CD8-positive, alpha-beta memory T cell (primary cell): ENCODE measurements at regions of chr6 and their contacts with region 1.

Region 1: DNA sequence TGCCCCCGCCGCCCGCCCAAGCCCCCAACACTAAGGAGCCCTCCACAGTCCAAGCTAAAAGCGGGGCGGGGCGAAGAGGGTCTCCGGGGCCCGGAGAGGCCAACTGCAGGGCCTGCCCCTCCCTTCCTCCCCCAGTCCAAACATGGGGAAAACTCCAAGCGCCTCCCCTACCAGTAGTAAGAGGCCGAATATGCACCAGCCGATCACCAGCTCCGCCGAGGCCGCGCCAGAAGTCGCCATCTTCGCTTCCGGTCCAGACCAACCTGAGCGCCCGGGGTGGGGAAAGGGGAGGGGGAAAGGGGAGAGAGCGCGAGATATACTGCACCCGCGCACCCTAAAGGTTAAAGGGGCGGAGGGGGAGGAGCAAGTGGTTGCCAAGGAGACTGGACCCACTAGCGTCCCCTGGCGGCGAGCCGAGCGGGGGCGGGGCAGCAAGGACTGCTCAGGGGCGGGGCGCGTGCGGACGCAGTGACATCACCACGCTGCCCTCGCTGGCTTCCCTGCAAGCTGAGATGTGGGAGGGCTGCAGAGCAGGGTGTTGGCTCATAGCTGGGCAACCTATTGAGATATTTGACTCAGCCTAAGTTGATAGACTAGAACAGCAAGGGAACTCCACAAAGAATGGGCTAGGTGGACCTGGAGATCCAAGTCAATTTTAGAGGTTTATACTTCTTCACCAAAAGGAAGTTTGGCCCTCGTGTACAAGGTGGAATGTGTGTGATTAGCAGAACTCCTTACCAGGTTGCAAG is at the start of gene LMBRD1:
- DNase-seq: peak; percentile 98 to 99 (median 99)
- H3K4me3 ChIP-seq: peak within 1 kb of the TSS; percentile 85
- H3K4me3 Mint-ChIP-seq: peak within 1 kb of the TSS; percentile 90 to 98 (median 93)
- H3K27ac ChIP-seq: peak within 1 kb of the TSS; percentile 97
- H3K27ac Mint-ChIP-seq: peak within 1 kb of the TSS; percentile 96 to 100 (median 98)
- H3K4me1 ChIP-seq: peaks cover 24% of the 10 kb centered on the region
- H3K4me1 Mint-ChIP-seq: peaks cover 43 to 59% (median 53%) of the 10 kb centered on the region in 3 donors
- H3K27me3 ChIP-seq: no peaks in the 10 kb centered on the region
- H3K27me3 Mint-ChIP-seq: no peaks in the 10 kb centered on the region
- total RNA-seq, gene LMBRD1: 16.2 to 17.3 TPM

Region 2: GRCh38 chr6:69813508-69813907 is 16.7 kb after region 1 on chr6:
- CTCF ChIA-PET with region 1: interaction called, 17 read pairs
- POLR2A ChIA-PET with region 1: interaction called, 9 read pairs
- DNase-seq: peak in 1 of 5 donors; percentile 14
- H3K4me3 ChIP-seq: peak overlapping the region; percentile 18
- H3K4me3 Mint-ChIP-seq: peak overlapping the region in 6 of 7 donors; percentile 3 to 57 (median 33)
- H3K27ac ChIP-seq: no peak overlapping the region
- H3K27ac Mint-ChIP-seq: peak overlapping the region; percentile 7 to 89 (median 80)
- H3K4me1 ChIP-seq: peaks cover 48% of the 10 kb centered on the region
- H3K4me1 Mint-ChIP-seq: peaks cover 43 to 59% (median 48%) of the 10 kb centered on the region in 3 donors
- H3K27me3 ChIP-seq: no peaks in the 10 kb centered on the region
- H3K27me3 Mint-ChIP-seq: peaks cover 0 to 2% of the 10 kb centered on the region in 2 donors

Region 3: GRCh38 chr6:69866770-69867638 is 70.2 kb after region 1 on chr6:
- CTCF ChIA-PET with region 1: interaction called, 15 read pairs
- POLR2A ChIA-PET with region 1: interaction called, 5 read pairs
- DNase-seq: peak; percentile 22 to 70 (median 57)
- H3K4me3 ChIP-seq: peak overlapping the region; percentile 58
- H3K4me3 Mint-ChIP-seq: peak overlapping the region; percentile 79 to 90 (median 83)
- H3K27ac ChIP-seq: no peak overlapping the region
- H3K27ac Mint-ChIP-seq: peak overlapping the region in 5 of 8 donors; percentile 0 to 82 (median 22)
- H3K4me1 ChIP-seq: peaks cover 16% of the 10 kb centered on the region
- H3K4me1 Mint-ChIP-seq: peaks cover 15 to 23% (median 23%) of the 10 kb centered on the region in 3 donors
- H3K27me3 ChIP-seq: peaks cover 10% of the 10 kb centered on the region
- H3K27me3 Mint-ChIP-seq: peaks cover 13 to 52% of the 10 kb centered on the region in 2 donors